ENCODE measurements at regions of chr2 and their contacts with region 1.

Region 1: GRCh38 chr2:169069341-169069740 is at the start of gene DHRS9:
- DNase-seq: no peak
- H3K4me3 Mint-ChIP-seq: peak within 1 kb of the TSS; percentile 67
- H3K27ac Mint-ChIP-seq: peak within 1 kb of the TSS; percentile 59
- H3K4me1 Mint-ChIP-seq: peaks cover 44% of the 10 kb centered on the region
- H3K27me3 Mint-ChIP-seq: no peaks in the 10 kb centered on the region
- total RNA-seq, gene DHRS9: 3.3 and 3.6 TPM in 2 replicates

Region 2: GRCh38 chr2:168976034-168976654 is 93.2 kb before region 1 on chr2:
- intact Hi-C with region 1: loop called (anchors 2 kb)
- DNase-seq: no peak
- H3K4me3 Mint-ChIP-seq: no peak overlapping the region
- H3K27ac Mint-ChIP-seq: no peak overlapping the region
- H3K4me1 Mint-ChIP-seq: no peaks in the 10 kb centered on the region
- H3K27me3 Mint-ChIP-seq: no peaks in the 10 kb centered on the region

Region 3: GRCh38 chr2:169012812-169013627 is 56.3 kb before region 1 on chr2:
- intact Hi-C with region 1: loop called (anchors 1 kb)
- DNase-seq: no peak
- H3K4me3 Mint-ChIP-seq: no peak overlapping the region
- H3K27ac Mint-ChIP-seq: peak overlapping the region; percentile 70
- H3K4me1 Mint-ChIP-seq: peaks cover 7% of the 10 kb centered on the region
- H3K27me3 Mint-ChIP-seq: peaks cover 4% of the 10 kb centered on the region

Region 4: DNA sequence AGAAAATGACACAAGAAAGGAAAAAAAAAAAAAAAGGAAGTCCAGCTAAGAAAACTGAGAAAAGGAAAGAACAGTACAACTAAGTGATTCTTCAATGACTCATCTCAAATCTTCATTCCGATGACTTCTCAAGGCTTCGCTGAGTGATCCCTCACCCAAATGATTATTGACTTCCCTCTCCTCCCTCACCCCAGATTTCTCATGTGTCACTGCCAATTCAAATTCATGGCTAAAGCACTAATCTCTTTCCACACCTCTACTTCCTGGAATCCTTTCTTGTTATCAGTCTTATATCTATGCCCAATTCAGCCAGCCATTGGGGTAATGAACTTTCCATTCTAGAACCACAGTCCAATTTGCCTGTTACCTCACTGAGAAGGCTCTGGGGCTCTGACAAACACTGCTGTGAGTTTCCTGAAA is 31.0 kb before region 1 on chr2:
- intact Hi-C with region 1: loop called (anchors 5 kb)
- DNase-seq: no peak
- H3K4me3 Mint-ChIP-seq: no peak overlapping the region
- H3K27ac Mint-ChIP-seq: no peak overlapping the region
- H3K4me1 Mint-ChIP-seq: peaks cover 24% of the 10 kb centered on the region
- H3K27me3 Mint-ChIP-seq: no peaks in the 10 kb centered on the region

Region 5: GRCh38 chr2:169095621-169096105 is 26.3 kb after region 1 on chr2:
- intact Hi-C with region 1: loop called (anchors 1 kb)
- DNase-seq: peak; percentile 15
- H3K4me3 Mint-ChIP-seq: peak overlapping the region; percentile 9
- H3K27ac Mint-ChIP-seq: peak overlapping the region; percentile 73
- H3K4me1 Mint-ChIP-seq: peaks cover 39% of the 10 kb centered on the region
- H3K27me3 Mint-ChIP-seq: no peaks in the 10 kb centered on the region

Measured in activated T-helper 2 cell treated with anti-CD3 and anti-CD28 coated beads, Interferon-gamma antibody, Interleukin-2, Interleukin-4, amounts not matched to agents 10 μg/mL and 5 μg/mL and 100 μg/mL, durations not matched to agents 14 hours and 24 hours and 36 hours (primary cell).